ENCODE measurements at regions of chr20 and their contacts with region 1.

Region 1: GRCh38 chr20:37095599-37096414 is at the start of gene RBL1:
- DNase-seq: peak; percentile 85
- ATAC-seq: peak; percentile 87
- H3K4me3 Mint-ChIP-seq: peak within 1 kb of the TSS; percentile 99
- H3K27ac Mint-ChIP-seq: peak within 1 kb of the TSS; percentile 100
- H3K4me1 Mint-ChIP-seq: peaks cover 33% of the 10 kb centered on the region
- H3K27me3 Mint-ChIP-seq: no peaks in the 10 kb centered on the region
- CTCF ChIP-seq: no peak
- total RNA-seq, gene RBL1: 18.6 and 20.4 TPM in 2 replicates

Region 2: DNA sequence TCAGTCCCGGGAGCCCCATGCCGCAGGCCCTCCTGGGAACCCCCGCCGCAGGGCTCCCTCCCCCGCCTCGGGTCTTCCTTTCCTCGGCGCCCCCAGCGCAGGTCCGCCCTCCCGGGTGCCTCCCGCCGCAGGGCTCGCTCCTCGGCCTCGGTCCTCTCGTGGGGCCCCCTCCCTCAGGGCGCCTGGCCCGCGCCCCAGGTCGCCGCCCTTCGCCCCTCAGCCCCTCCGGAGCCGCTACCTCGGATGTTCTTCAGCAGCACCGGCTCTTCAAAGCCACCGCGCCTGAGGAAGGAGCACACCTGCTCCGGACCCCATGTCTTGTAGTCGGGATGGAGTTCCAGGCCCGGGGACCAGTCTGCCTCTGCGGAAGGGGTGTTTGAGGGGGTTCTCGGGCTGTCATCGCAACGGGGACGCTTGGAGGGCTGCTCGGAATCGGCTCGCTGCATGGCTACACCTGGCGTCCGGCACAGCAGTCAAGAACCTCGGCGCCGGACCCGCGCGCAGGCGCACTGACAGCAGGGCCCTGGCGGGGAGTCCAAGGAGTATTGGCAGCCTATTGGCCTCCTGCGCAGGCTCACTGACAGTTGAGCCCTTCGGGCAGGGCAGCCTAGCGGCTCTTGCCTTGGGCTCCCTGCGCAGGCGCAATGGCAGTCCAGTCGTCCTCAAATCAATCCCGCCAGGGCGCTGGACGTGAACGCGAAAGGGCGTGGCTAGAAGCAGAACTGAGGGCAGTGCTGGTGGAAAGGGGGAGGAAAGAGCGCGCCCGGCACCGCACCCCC is 144.4 kb before region 1 on chr20 and contains the start of gene SAMHD1:
- CTCF ChIA-PET with region 1: no interaction called
- POLR2A ChIA-PET with region 1: no interaction called
- intact Hi-C with region 1: loop called (anchors 5 kb)
- DNase-seq: peak; percentile 85
- ATAC-seq: peak; percentile 97
- H3K4me3 Mint-ChIP-seq: peak within 1 kb of the TSS; percentile 96
- H3K27ac Mint-ChIP-seq: peak within 1 kb of the TSS; percentile 81
- H3K4me1 Mint-ChIP-seq: peaks cover 24% of the 10 kb centered on the region
- H3K27me3 Mint-ChIP-seq: no peaks in the 10 kb centered on the region
- CTCF ChIP-seq: no peak
- total RNA-seq, gene SAMHD1: 15.1 and 16.4 TPM in 2 replicates

Region 3: DNA sequence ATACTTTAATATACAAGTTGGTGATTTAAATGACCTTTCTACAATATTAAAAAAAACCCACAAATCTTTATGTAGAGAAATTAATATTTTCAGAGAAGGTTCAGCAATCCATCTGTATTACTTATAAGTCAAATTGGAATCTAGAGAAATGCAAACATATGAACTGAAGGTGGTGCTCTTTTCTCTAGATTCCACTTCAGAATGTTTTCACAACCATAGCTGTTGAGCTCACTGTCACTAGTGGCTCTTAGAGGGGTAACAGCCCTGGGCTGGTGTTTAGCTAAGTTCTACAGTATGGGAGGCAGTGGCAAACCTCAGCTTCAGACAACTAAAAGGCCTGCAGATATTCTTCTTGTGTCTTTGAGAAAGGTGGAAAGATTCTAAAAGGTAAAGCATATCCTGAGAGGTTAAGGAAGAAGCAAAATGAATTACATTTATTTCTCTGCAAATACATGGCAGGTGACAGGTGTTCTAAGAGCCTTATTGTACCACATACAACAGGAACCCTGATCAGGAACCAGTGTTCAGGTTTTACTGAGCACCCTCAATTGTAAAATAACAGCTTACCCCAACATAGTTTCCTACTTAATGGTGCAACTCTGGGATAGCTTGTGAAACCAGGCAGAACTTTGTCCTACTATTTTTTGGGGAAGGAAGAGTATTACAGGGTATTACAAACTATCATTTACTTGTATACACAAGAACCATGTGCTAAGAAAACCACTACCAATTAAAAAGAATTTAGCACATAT is 87.7 kb before region 1 on chr20:
- CTCF ChIA-PET with region 1: interaction called, 4 read pairs
- POLR2A ChIA-PET with region 1: interaction called, 5 read pairs
- intact Hi-C with region 1: loop called (anchors 5 kb)
- DNase-seq: no peak
- ATAC-seq: peak; percentile 26
- H3K4me3 Mint-ChIP-seq: peak overlapping the region; percentile 17
- H3K27ac Mint-ChIP-seq: peak overlapping the region; percentile 69
- H3K4me1 Mint-ChIP-seq: peaks cover 45% of the 10 kb centered on the region
- H3K27me3 Mint-ChIP-seq: no peaks in the 10 kb centered on the region
- CTCF ChIP-seq: no peak

Region 4: DNA sequence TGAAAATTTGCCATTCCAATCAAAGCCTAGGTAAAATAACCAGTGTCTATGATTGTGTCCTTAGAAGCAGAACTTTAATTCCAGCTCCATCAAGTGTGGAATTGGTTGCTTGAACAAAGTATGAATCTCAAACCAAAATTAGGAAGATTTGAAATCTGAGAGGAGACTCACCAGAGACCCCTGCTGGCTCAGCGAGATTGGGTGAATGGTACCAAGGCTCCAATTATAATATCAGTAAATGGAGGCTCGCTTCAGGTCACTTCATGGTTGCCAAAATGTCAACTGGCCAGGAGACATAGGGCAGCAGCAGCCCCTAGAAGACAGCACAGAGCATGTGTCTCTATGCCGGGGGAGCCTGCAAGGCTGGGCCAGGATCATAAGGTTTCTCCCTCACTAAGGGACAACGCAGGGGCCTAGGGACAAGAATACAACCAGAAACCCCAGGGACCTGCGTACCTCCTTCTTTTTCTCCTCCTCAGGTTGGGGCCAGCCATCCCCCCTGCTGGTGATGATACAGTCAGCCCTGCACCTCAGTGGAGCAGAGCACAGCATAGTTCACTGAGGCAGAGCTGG is 14.0 kb before region 1 on chr20:
- CTCF ChIA-PET with region 1: no interaction called
- POLR2A ChIA-PET with region 1: interaction called, 11 read pairs
- intact Hi-C with region 1: no loop called
- DNase-seq: no peak
- ATAC-seq: peak; percentile 45
- H3K4me3 Mint-ChIP-seq: no peak overlapping the region
- H3K27ac Mint-ChIP-seq: no peak overlapping the region
- H3K4me1 Mint-ChIP-seq: peaks cover 2% of the 10 kb centered on the region
- H3K27me3 Mint-ChIP-seq: no peaks in the 10 kb centered on the region
- CTCF ChIP-seq: no peak

Measured in activated B cell treated with CpG ODN at 0.5 μM for 24 hours (primary cell).